Esophagus muscularis mucosa (tissue), 4 donors: ENCODE measurements at regions of chr7 and their contacts with region 1.

Region 1: GRCh38 chr7:7799138-7799537 is 80.7 kb upstream of the RPA3 start:
- DNase-seq: no peak
- H3K4me3 ChIP-seq: no peak overlapping the region
- H3K27ac ChIP-seq: no peak overlapping the region
- H3K4me1 ChIP-seq: no peaks in the 10 kb centered on the region
- H3K27me3 ChIP-seq: no peaks in the 10 kb centered on the region
- CTCF ChIP-seq: no peak
- EP300 ChIP-seq: no peak
- POLR2A ChIP-seq: no peak

Region 2: GRCh38 chr7:7761981-7762769 is 37.0 kb before region 1 on chr7:
- intact Hi-C with region 1: no loop called
- DNase-seq: no peak
- H3K4me3 ChIP-seq: peak overlapping the region; percentile 41 to 55 (median 50)
- H3K27ac ChIP-seq: peak overlapping the region; percentile 35 to 65 (median 55)
- H3K4me1 ChIP-seq: peaks cover 3 to 33% (median 17%) of the 10 kb centered on the region in 4 donors
- H3K27me3 ChIP-seq: no peaks in the 10 kb centered on the region
- CTCF ChIP-seq: no peak
- EP300 ChIP-seq: no peak
- POLR2A ChIP-seq: no peak

Region 3: GRCh38 chr7:7819442-7820247 is 20.5 kb after region 1 on chr7:
- intact Hi-C with region 1: loop called (anchors 2 kb)
- DNase-seq: no peak
- H3K4me3 ChIP-seq: no peak overlapping the region
- H3K27ac ChIP-seq: no peak overlapping the region
- H3K4me1 ChIP-seq: no peaks in the 10 kb centered on the region
- H3K27me3 ChIP-seq: no peaks in the 10 kb centered on the region
- CTCF ChIP-seq: no peak
- EP300 ChIP-seq: no peak
- POLR2A ChIP-seq: no peak

Region 4: GRCh38 chr7:8068892-8069686 is 270.0 kb after region 1 on chr7:
- intact Hi-C with region 1: no loop called
- DNase-seq: no peak
- H3K4me3 ChIP-seq: no peak overlapping the region
- H3K27ac ChIP-seq: no peak overlapping the region
- H3K4me1 ChIP-seq: peaks cover 0 to 5% (median 0%) of the 10 kb centered on the region in 4 donors
- H3K27me3 ChIP-seq: no peaks in the 10 kb centered on the region
- CTCF ChIP-seq: no peak
- EP300 ChIP-seq: no peak
- POLR2A ChIP-seq: no peak